ENCODE measurements at regions of chr1 and their contacts with region 1.

Region 1: DNA sequence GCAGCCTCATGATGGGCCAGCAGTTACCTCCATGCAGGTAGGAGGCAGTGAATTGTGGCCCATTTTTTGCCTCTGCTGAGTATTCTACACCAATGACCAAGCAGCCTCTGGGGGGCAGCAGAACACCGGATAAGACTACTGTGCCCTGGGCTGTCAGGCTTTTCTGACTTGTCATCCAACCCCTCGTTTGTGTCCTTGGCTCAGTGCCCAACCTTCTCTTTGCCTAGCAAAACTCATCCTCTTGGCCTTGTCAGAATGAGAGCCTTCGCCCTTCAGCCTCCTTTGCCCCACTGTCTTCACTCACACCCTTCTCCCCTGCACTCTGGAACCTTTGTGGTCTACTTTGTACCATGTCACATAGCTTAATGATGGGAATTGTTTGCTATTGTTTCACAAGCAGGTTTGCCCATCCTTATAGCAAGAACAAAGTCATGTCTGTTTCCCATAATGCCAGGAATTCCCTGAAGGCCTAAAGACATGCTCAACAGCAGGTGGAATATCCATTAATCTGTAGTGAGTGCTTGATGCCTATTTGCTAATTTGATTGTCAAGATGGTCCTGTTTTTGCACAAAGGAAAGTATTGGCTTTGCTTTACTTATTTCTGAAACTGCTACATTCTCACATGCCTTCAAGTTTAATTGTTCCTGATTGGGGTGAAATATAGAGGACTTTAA is 255.9 kb downstream of the HHAT start:
- DNase-seq: peak; percentile 68
- H3K4me3 ChIP-seq: no peak overlapping the region
- H3K27ac ChIP-seq: no peak overlapping the region
- H3K4me1 ChIP-seq: no peaks in the 10 kb centered on the region
- H3K27me3 ChIP-seq: no peaks in the 10 kb centered on the region
- CTCF ChIP-seq: peak in 3 of 4 experiments; percentile 59 to 67 (median 60)
- POLR2A ChIP-seq: no peak

Region 2: GRCh38 chr1:210448297-210448892 is 136.2 kb before region 1 on chr1:
- intact Hi-C with region 1: loop called (anchors 2 kb)
- DNase-seq: peak; percentile 11
- H3K4me3 ChIP-seq: no peak overlapping the region
- H3K27ac ChIP-seq: no peak overlapping the region
- H3K4me1 ChIP-seq: no peaks in the 10 kb centered on the region
- H3K27me3 ChIP-seq: no peaks in the 10 kb centered on the region
- CTCF ChIP-seq: peak in 3 of 4 experiments; percentile 38 to 68 (median 55)
- POLR2A ChIP-seq: no peak

Region 3: GRCh38 chr1:210536254-210536961 is 48.2 kb before region 1 on chr1:
- intact Hi-C with region 1: no loop called
- DNase-seq: peak; percentile 33
- H3K4me3 ChIP-seq: no peak overlapping the region
- H3K27ac ChIP-seq: no peak overlapping the region
- H3K4me1 ChIP-seq: peaks cover 2% of the 10 kb centered on the region
- H3K27me3 ChIP-seq: no peaks in the 10 kb centered on the region
- CTCF ChIP-seq: no peak
- POLR2A ChIP-seq: no peak

Region 4: DNA sequence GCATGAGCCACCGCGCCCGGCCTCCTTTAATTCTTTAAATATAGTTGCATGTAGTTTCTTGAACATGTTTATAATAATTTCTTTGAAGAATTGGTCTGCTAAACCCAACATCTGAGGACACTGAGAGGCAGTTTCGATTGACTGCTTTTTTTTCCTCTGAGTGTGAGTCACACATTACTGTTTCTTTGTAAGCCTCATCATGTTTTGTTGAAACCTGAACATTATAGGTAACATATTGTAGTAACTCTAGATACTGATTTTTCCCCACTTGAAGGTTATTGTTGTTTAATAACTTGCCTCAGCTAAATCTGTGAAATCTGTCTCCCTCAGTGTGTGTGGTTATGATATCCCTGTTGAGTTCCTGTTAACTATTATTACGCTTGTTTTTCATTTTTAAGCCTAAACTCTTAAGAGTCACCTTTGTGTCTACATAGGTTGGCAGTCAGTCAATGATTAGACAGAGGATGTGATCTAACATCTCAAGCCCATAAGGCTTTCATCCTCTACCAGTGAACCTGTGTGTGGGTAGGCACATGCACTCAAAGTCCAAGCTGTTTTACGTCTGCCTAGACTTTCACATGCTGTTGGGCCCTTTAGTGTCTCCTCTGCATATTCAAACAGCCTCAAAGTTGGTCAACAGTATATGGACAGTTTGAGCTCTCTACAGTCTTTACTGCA is 393.9 kb after region 1 on chr1:
- intact Hi-C with region 1: no loop called
- DNase-seq: no peak
- H3K4me3 ChIP-seq: no peak overlapping the region
- H3K27ac ChIP-seq: no peak overlapping the region
- H3K4me1 ChIP-seq: no peaks in the 10 kb centered on the region
- H3K27me3 ChIP-seq: no peaks in the 10 kb centered on the region
- CTCF ChIP-seq: no peak
- POLR2A ChIP-seq: no peak

Measured in prostate gland (tissue), 2 donors.